Pancreas (tissue), 10 donors: ENCODE measurements at regions of chr15 and their contacts with region 1.

Region 1: DNA sequence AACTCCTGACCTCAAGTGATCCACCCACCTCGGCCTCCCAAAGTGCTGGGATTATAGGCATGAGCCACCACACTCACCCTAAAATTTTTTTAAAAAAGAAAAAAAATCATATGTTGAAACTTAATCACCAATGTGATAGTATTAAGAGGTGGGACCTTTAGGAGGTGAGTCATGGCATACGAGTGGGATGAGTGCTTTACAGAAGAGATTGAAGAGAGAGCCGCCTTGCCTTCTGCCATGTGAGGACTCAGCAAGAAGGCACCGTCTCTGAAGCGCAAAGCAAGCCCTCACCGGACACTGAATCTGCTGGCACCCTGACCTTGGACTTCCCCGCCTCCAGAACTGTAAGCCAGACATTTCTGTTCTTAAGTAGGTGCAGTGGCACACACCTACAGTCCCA is 5.5 kb downstream of the ARPIN start:
- DNase-seq: no peak
- ATAC-seq: no peak
- H3K4me3 ChIP-seq: no peak overlapping the region
- H3K27ac ChIP-seq: no peak overlapping the region
- H3K4me1 ChIP-seq: peaks cover 0 to 16% (median 10%) of the 10 kb centered on the region in 3 donors
- H3K27me3 ChIP-seq: no peaks in the 10 kb centered on the region
- CTCF ChIP-seq: no peak

Region 2: DNA sequence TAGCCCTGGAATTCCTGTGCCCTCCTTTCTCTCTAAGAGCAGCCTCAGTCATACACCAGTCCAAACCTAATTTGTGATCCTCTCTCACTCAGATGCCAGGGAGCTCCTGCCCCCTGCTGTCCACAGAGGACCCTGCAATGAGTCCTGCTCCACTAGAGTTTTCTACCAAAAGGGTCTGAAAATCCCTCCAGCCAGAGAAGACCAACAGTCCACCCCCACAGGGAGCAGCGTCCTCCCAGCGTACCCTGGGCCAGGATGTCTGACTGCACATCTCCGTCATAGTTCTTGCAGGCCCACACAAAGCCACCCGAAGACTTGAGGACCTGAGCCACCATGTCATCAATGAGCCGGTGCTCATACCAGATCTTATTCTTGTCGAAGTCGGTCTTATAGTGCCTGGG is 179.6 kb after region 1 on chr15:
- intact Hi-C with region 1: loop called in 1 of 3 experiments (anchors 10 kb)
- DNase-seq: peak in 1 of 6 donors; percentile 29
- ATAC-seq: peak; percentile 10 to 59 (median 40)
- H3K4me3 ChIP-seq: no peak overlapping the region
- H3K27ac ChIP-seq: peak overlapping the region in 1 of 4 donors; percentile 19
- H3K4me1 ChIP-seq: peaks cover 0 to 14% (median 0%) of the 10 kb centered on the region in 3 donors
- H3K27me3 ChIP-seq: no peaks in the 10 kb centered on the region
- CTCF ChIP-seq: peak; percentile 25 to 43 (median 33)